HEK293 (cell line): ENCODE measurements at regions of chr3 and their contacts with region 1.

Region 1: GRCh38 chr3:148757238-148758215 is 59.8 kb downstream of the AGTR1 start:
- H3K4me3 ChIP-seq: no peak overlapping the region
- H3K27ac ChIP-seq: no peak overlapping the region
- H3K4me1 ChIP-seq: no peaks in the 10 kb centered on the region
- CTCF ChIP-seq: no peak

Region 2: DNA sequence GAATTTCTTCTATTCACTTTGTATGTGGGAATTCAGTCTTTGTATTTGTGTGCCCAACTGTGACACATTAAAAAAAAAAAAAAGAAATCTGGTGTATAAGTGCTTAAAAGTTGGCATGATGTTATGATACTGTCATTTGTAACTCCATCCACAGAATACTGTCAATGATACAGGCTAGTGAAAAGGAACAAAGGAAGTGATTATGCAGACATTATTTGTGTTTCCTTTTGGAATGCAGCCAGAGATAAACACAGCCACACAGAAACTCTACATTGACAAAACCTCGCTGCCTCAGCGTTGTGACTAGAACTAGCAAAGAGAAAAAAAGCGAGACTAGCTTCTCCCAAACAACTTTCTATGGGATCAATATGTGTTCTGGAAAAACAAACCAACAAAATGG is 579.0 kb before region 1 on chr3:
- CTCF ChIA-PET with region 1: no interaction called
- POLR2A ChIA-PET with region 1: interaction called, 11 read pairs
- H3K4me3 ChIP-seq: no peak overlapping the region
- H3K27ac ChIP-seq: no peak overlapping the region
- H3K4me1 ChIP-seq: no peaks in the 10 kb centered on the region
- CTCF ChIP-seq: no peak

Region 3: GRCh38 chr3:148604270-148605085 is 153.0 kb before region 1 on chr3:
- CTCF ChIA-PET with region 1: no interaction called
- POLR2A ChIA-PET with region 1: no interaction called
- H3K4me3 ChIP-seq: no peak overlapping the region
- H3K27ac ChIP-seq: no peak overlapping the region
- H3K4me1 ChIP-seq: no peaks in the 10 kb centered on the region
- CTCF ChIP-seq: no peak

Region 4: GRCh38 chr3:148880681-148881080 is 123.2 kb after region 1 on chr3:
- CTCF ChIA-PET with region 1: no interaction called
- POLR2A ChIA-PET with region 1: no interaction called
- H3K4me3 ChIP-seq: no peak overlapping the region
- H3K27ac ChIP-seq: no peak overlapping the region
- H3K4me1 ChIP-seq: peaks cover 5% of the 10 kb centered on the region
- CTCF ChIP-seq: no peak

Region 5: GRCh38 chr3:148896062-148896461 is 138.5 kb after region 1 on chr3:
- CTCF ChIA-PET with region 1: no interaction called
- POLR2A ChIA-PET with region 1: no interaction called
- H3K4me3 ChIP-seq: no peak overlapping the region
- H3K27ac ChIP-seq: no peak overlapping the region
- H3K4me1 ChIP-seq: no peaks in the 10 kb centered on the region
- CTCF ChIP-seq: no peak